HCT116 (cell line): ENCODE measurements at regions of chr13 and their contacts with region 1.

Region 1: DNA sequence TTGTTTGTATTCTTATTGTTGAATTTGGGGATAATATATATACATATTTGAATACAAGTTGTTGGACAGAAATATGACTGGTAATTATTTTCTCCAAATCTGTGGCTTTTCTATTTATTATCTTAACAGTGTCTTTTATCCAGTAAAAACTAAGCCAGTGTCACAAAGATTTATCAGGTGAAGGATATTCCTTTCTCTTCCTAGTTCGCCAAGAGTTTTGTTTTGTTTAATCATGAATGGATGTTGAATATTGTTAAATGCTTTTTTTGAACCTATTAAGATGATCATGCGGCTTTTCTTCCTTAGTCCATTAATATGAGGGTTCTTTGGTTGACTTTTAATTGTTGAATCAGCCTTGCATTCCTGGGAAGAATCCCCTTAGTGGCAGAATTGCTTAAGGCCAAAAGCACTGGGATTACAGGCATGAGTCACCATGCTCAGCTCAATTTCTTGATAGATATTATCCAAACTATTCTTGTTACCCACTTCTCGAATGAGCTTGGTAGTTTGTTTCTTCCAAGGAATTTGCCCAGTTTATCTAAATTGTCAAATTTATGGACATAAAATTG is 53.3 kb downstream of the TEX26 start:
- DNase-seq: no peak
- ATAC-seq: no peak
- H3K4me3 ChIP-seq: no peak overlapping the region
- H3K27ac ChIP-seq: no peak overlapping the region
- H3K4me1 ChIP-seq: peaks cover 4 to 14% of the 10 kb centered on the region in 2 experiments; a peak in 3 of 4 replicates
- H3K27me3 ChIP-seq: no peaks in the 10 kb centered on the region
- CTCF ChIP-seq: no peak
- POLR2A ChIP-seq: no peak
- RAD21 ChIP-seq: no peak

Region 2: GRCh38 chr13:30927595-30927994 is 58.1 kb before region 1 on chr13:
- CTCF ChIA-PET with region 1: no interaction called
- POLR2A ChIA-PET with region 1: no interaction called
- RAD21 ChIA-PET with region 1: no interaction called
- intact Hi-C with region 1: loop called (anchors 10 kb)
- DNase-seq: no peak
- ATAC-seq: no peak
- H3K4me3 ChIP-seq: no peak overlapping the region
- H3K27ac ChIP-seq: no peak overlapping the region
- H3K4me1 ChIP-seq: no peaks in the 10 kb centered on the region
- H3K27me3 ChIP-seq: no peaks in the 10 kb centered on the region
- CTCF ChIP-seq: no peak
- POLR2A ChIP-seq: no peak
- RAD21 ChIP-seq: no peak